ENCODE measurements at regions of chr9 and their contacts with region 1.

Region 1: GRCh38 chr9:113657703-113658544 is 194.4 kb downstream of the RGS3 start:
- DNase-seq: peak; percentile 67 to 80
- ATAC-seq: peak; percentile 80 to 91
- H3K4me3 ChIP-seq: no peak overlapping the region
- H3K27ac ChIP-seq: no peak overlapping the region
- H3K4me1 ChIP-seq: peaks cover 10 to 21% of the 10 kb centered on the region in 2 donors
- H3K27me3 ChIP-seq: no peaks in the 10 kb centered on the region
- CTCF ChIP-seq: peak; percentile 93 to 98 (median 95)
- POLR2A ChIP-seq: no peak

Region 2: GRCh38 chr9:113309204-113309813 is 348.6 kb before region 1 on chr9:
- in situ Hi-C with region 1: loop called in 1 of 4 experiments (anchors 25 kb)
- intact Hi-C with region 1: no loop called
- DNase-seq: no peak
- ATAC-seq: no peak
- H3K4me3 ChIP-seq: no peak overlapping the region
- H3K27ac ChIP-seq: no peak overlapping the region
- H3K4me1 ChIP-seq: peaks cover 0 to 3% of the 10 kb centered on the region in 2 donors
- H3K27me3 ChIP-seq: no peaks in the 10 kb centered on the region
- CTCF ChIP-seq: peak in 4 of 5 experiments; percentile 23 to 49 (median 33)
- POLR2A ChIP-seq: no peak

Region 3: DNA sequence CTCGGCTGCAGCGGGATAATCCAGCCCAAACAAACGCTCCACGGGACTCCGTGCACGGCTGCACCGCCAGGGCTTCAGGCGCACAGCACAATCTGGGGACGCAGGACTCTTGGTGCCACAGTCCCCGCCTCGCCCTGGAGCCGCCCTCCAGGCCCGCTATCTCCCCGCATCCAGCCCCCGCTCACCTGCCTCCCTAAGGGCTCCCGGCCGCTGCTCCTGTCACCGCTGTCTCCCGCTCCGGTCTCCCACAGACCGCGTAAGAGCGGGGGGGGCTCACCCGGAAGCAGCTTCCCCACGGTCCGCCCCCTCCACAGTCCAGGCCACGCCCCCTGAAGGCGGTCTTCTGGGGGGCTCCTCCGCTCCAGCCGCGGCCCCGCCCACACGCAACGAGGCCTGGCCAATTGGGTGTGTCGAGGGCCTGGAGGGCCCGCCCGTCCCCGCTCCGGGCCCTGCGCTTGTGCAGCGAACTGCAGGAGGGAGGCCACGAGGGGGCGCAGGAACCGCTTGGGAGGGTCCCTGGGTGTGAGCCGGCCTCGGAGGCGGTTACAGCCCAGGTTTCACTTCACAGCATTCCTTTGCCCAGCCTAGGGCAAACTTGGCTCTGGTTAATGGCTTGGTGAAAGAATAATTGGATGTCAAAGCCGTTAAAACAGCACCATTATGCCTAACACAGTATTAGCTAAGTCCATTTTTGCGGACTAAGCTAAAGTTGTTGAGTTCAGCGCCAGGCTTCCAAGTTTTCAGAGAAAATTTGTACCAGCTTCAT is 256.7 kb before region 1 on chr9 and contains the start of gene ALAD:
- in situ Hi-C with region 1: no loop called
- intact Hi-C with region 1: loop called (anchors 1 kb)
- DNase-seq: peak; percentile 96 to 99
- ATAC-seq: peak; percentile 95 to 98
- H3K4me3 ChIP-seq: peak within 1 kb of the TSS; percentile 86 to 98 (median 90)
- H3K27ac ChIP-seq: peak within 1 kb of the TSS; percentile 70 to 86 (median 80)
- H3K4me1 ChIP-seq: peaks cover 20 to 26% of the 10 kb centered on the region in 2 donors
- H3K27me3 ChIP-seq: no peaks in the 10 kb centered on the region
- CTCF ChIP-seq: peak; percentile 92 to 97 (median 94)
- POLR2A ChIP-seq: peak; percentile 27 to 38
- total RNA-seq, gene ALAD: 8.9 to 16.2 (median 12.3) TPM

Region 4: GRCh38 chr9:113446323-113446740 is 211.6 kb before region 1 on chr9:
- in situ Hi-C with region 1: loop called (anchors 5 kb)
- intact Hi-C with region 1: loop called (anchors 2 kb)
- DNase-seq: no peak
- ATAC-seq: peak; percentile 65 to 90
- H3K4me3 ChIP-seq: no peak overlapping the region
- H3K27ac ChIP-seq: peak overlapping the region in 1 of 4 donors; percentile 27
- H3K4me1 ChIP-seq: no peaks in the 10 kb centered on the region
- H3K27me3 ChIP-seq: no peaks in the 10 kb centered on the region
- CTCF ChIP-seq: peak; percentile 68 to 77 (median 71)
- POLR2A ChIP-seq: no peak

Region 5: GRCh38 chr9:113463418-113464285 is 194.3 kb before region 1 on chr9 and contains the start of gene RGS3:
- in situ Hi-C with region 1: no loop called
- intact Hi-C with region 1: loop called (anchors 5 kb)
- DNase-seq: peak; percentile 60 to 79
- ATAC-seq: peak; percentile 89 to 91
- H3K4me3 ChIP-seq: peak within 1 kb of the TSS; percentile 44 to 69 (median 59)
- H3K27ac ChIP-seq: peak within 1 kb of the TSS; percentile 74 to 87 (median 82)
- H3K4me1 ChIP-seq: peaks cover 11 to 32% of the 10 kb centered on the region in 2 donors
- H3K27me3 ChIP-seq: no peaks in the 10 kb centered on the region
- CTCF ChIP-seq: peak in 2 of 5 experiments; percentile 10 to 31
- POLR2A ChIP-seq: peak; percentile 34 to 35
- total RNA-seq, gene RGS3: 5.9 to 11.8 (median 9.8) TPM

Region 6: GRCh38 chr9:113591001-113591898 is 66.7 kb before region 1 on chr9:
- in situ Hi-C with region 1: loop called (anchors 5 kb)
- intact Hi-C with region 1: loop called (anchors 1 kb)
- DNase-seq: peak; percentile 61 to 80
- ATAC-seq: peak; percentile 77
- H3K4me3 ChIP-seq: no peak overlapping the region
- H3K27ac ChIP-seq: peak overlapping the region; percentile 49 to 77 (median 69)
- H3K4me1 ChIP-seq: peaks cover 28 to 59% of the 10 kb centered on the region in 2 donors
- H3K27me3 ChIP-seq: no peaks in the 10 kb centered on the region
- CTCF ChIP-seq: peak; percentile 91 to 96 (median 93)
- POLR2A ChIP-seq: no peak

Region 7: GRCh38 chr9:113963017-113963620 is 305.2 kb after region 1 on chr9:
- in situ Hi-C with region 1: no loop called
- intact Hi-C with region 1: no loop called
- DNase-seq: peak in 1 of 2 donors; percentile 32
- ATAC-seq: peak; percentile 49 to 56
- H3K4me3 ChIP-seq: no peak overlapping the region
- H3K27ac ChIP-seq: no peak overlapping the region
- H3K4me1 ChIP-seq: peaks cover 0 to 10% of the 10 kb centered on the region in 2 donors
- H3K27me3 ChIP-seq: no peaks in the 10 kb centered on the region
- CTCF ChIP-seq: peak; percentile 54 to 79 (median 64)
- POLR2A ChIP-seq: no peak